ENCODE measurements at regions of chr10 and their contacts with region 1.

Region 1: GRCh38 chr10:67779465-67780203 is 58.4 kb downstream of the DNAJC12 start:
- DNase-seq: peak; percentile 85
- H3K4me3 Mint-ChIP-seq: no peak overlapping the region
- H3K27ac Mint-ChIP-seq: no peak overlapping the region
- H3K4me1 Mint-ChIP-seq: peaks cover 21% of the 10 kb centered on the region
- H3K27me3 Mint-ChIP-seq: no peaks in the 10 kb centered on the region

Region 2: DNA sequence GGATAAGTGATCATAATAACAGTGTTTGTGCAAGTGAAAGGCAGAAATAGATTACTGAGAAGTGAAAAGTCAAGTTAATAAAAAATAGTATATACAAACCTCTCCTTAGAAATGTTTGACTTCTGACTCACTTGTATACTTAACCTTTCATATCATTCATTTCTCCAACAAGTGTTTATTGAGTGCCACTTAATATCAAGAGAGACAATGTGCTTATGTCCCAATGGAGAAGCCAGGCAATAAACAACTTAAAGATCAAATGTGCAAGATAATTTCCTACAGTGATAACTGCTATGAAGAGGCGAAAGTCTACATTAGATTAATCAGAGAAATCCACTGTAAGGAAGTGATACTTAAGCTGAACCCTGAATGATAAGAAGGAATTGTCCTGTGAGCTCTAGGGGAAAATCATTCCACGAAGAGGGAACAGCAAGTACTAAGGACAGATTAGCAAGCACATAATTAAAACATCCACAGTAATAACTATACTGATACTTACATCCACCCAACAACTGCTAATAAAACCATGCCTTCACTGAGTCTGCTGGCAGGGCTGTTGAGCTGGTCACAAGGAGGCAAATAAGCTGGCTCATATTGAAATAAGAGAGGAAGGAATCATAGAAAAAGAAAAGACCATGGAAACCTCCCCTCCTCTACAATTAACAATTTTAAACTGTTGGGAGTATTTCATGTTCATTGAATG is 287.2 kb before region 1 on chr10:
- CTCF ChIA-PET with region 1: no interaction called
- intact Hi-C with region 1: no loop called
- DNase-seq: no peak
- H3K4me3 Mint-ChIP-seq: no peak overlapping the region
- H3K27ac Mint-ChIP-seq: no peak overlapping the region
- H3K4me1 Mint-ChIP-seq: no peaks in the 10 kb centered on the region
- H3K27me3 Mint-ChIP-seq: no peaks in the 10 kb centered on the region

Region 3: GRCh38 chr10:67520924-67521520 is 258.6 kb before region 1 on chr10:
- CTCF ChIA-PET with region 1: interaction called, 5 read pairs
- intact Hi-C with region 1: loop called (anchors 5 kb)
- DNase-seq: peak; percentile 54
- H3K4me3 Mint-ChIP-seq: no peak overlapping the region
- H3K27ac Mint-ChIP-seq: no peak overlapping the region
- H3K4me1 Mint-ChIP-seq: peaks cover 1% of the 10 kb centered on the region
- H3K27me3 Mint-ChIP-seq: no peaks in the 10 kb centered on the region

Region 4: GRCh38 chr10:67612577-67613537 is 166.8 kb before region 1 on chr10:
- CTCF ChIA-PET with region 1: interaction called, 6 read pairs
- intact Hi-C with region 1: loop called (anchors 2 kb)
- DNase-seq: peak; percentile 75
- H3K4me3 Mint-ChIP-seq: no peak overlapping the region
- H3K27ac Mint-ChIP-seq: peak overlapping the region; percentile 25
- H3K4me1 Mint-ChIP-seq: peaks cover 24% of the 10 kb centered on the region
- H3K27me3 Mint-ChIP-seq: no peaks in the 10 kb centered on the region

Region 5: DNA sequence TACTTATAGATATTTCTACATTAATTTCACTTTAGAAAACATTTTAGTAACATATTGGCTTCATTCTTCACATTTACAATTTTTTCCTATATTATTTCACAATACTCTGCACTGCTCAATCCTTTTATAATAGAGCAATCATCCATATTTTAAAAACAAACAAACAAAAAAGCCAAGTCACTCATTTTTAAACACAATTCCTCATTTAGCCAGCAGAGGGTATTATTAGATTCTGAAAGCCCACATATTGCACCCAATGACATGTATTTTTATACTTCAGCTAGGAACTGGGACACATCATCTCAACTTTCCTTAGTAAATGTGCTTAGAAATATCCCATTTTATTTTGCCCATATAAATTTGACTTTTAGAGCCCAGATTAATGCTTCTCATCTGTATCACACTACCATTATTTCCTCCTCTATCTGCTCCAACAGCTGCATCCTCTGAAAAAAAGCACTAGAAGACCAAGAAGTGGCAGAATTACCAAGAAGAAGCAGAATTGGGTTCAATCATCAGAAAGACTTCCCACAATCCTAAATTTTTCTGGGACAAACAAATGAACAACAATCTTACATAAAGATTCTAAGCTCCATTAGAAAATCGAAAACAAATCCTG is 113.1 kb before region 1 on chr10:
- CTCF ChIA-PET with region 1: interaction called, 61 read pairs
- intact Hi-C with region 1: loop called (anchors 1 kb)
- DNase-seq: no peak
- H3K4me3 Mint-ChIP-seq: no peak overlapping the region
- H3K27ac Mint-ChIP-seq: no peak overlapping the region
- H3K4me1 Mint-ChIP-seq: no peaks in the 10 kb centered on the region
- H3K27me3 Mint-ChIP-seq: no peaks in the 10 kb centered on the region

Region 6: GRCh38 chr10:67697724-67698131 is 81.9 kb before region 1 on chr10:
- CTCF ChIA-PET with region 1: interaction called, 169 read pairs
- intact Hi-C with region 1: loop called (anchors 1 kb)
- DNase-seq: peak; percentile 10
- H3K4me3 Mint-ChIP-seq: no peak overlapping the region
- H3K27ac Mint-ChIP-seq: no peak overlapping the region
- H3K4me1 Mint-ChIP-seq: no peaks in the 10 kb centered on the region
- H3K27me3 Mint-ChIP-seq: peaks cover 10% of the 10 kb centered on the region

Measured in activated naive CD4-positive, alpha-beta T cell treated with anti-CD3 and anti-CD28 coated beads for 36 hours (primary cell).